Calu3 (cell line): ENCODE measurements at regions of chr10 and their contacts with region 1.

Region 1: GRCh38 chr10:98028168-98028770 is 2.2 kb downstream of the CRTAC1 start:
- DNase-seq: peak; percentile 56
- H3K4me3 Mint-ChIP-seq: no peak overlapping the region
- H3K27ac Mint-ChIP-seq: no peak overlapping the region
- H3K4me1 Mint-ChIP-seq: no peaks in the 10 kb centered on the region
- H3K27me3 Mint-ChIP-seq: peaks cover 67% of the 10 kb centered on the region
- CTCF ChIP-seq: peak; percentile 61

Region 2: DNA sequence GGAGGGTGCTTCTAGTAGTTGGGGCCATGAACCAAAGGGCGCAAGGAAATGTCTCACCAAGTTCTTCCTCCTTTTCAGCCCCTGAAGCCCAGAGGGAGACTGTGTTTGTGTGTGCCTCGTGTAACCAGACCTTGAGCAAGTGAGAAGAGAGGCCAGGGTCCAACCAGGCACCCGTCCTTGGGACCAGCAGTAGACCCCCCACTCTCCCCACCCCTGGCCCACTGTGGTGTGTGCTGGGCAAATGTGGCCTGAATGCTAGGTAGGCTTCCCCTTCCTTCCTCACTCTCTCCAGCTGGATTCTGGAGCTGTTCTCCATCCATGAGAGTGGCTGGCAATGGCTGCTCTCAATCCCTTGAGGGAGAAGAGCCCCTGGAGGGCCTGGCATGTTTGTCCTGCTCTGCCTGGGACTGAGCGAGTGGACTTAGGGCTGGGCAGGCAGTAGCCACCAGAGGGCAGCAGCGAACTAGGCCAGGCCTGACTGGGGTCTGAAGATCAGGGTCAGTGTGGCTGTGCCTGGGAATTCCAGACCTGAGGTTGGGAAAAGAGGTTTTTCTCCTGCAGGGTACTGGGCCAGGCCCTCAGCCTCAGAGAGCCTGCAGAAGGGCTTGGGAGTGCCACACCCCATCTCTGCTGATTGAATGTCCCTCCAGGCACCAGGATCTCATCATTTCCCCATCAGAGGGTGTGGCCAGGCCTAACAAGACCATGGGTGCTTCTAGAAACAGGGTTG is 268.9 kb before region 1 on chr10:
- CTCF ChIA-PET with region 1: no interaction called
- intact Hi-C with region 1: loop called (anchors 5 kb)
- DNase-seq: peak; percentile 71
- H3K4me3 Mint-ChIP-seq: no peak overlapping the region
- H3K27ac Mint-ChIP-seq: no peak overlapping the region
- H3K4me1 Mint-ChIP-seq: no peaks in the 10 kb centered on the region
- H3K27me3 Mint-ChIP-seq: no peaks in the 10 kb centered on the region
- CTCF ChIP-seq: peak; percentile 71

Region 3: GRCh38 chr10:97948822-97949221 is 79.4 kb before region 1 on chr10:
- CTCF ChIA-PET with region 1: no interaction called
- intact Hi-C with region 1: no loop called
- DNase-seq: no peak
- H3K4me3 Mint-ChIP-seq: no peak overlapping the region
- H3K27ac Mint-ChIP-seq: no peak overlapping the region
- H3K4me1 Mint-ChIP-seq: no peaks in the 10 kb centered on the region
- H3K27me3 Mint-ChIP-seq: peaks cover 89% of the 10 kb centered on the region
- CTCF ChIP-seq: no peak

Region 4: GRCh38 chr10:97991871-97992270 is 36.4 kb before region 1 on chr10:
- CTCF ChIA-PET with region 1: no interaction called
- intact Hi-C with region 1: no loop called
- DNase-seq: peak; percentile 7
- H3K4me3 Mint-ChIP-seq: no peak overlapping the region
- H3K27ac Mint-ChIP-seq: no peak overlapping the region
- H3K4me1 Mint-ChIP-seq: no peaks in the 10 kb centered on the region
- H3K27me3 Mint-ChIP-seq: peaks cover 61% of the 10 kb centered on the region
- CTCF ChIP-seq: no peak